ENCODE measurements at regions of chr7 and their contacts with region 1.

Region 1: GRCh38 chr7:100428967-100429636 is 529 bp upstream of the MEPCE start:
- DNase-seq: peak; percentile 100
- ATAC-seq: peak; percentile 58
- H3K4me3 Mint-ChIP-seq: peak overlapping the region; percentile 98
- H3K27ac Mint-ChIP-seq: peak overlapping the region; percentile 100
- H3K4me1 Mint-ChIP-seq: peaks cover 45% of the 10 kb centered on the region
- H3K27me3 Mint-ChIP-seq: no peaks in the 10 kb centered on the region
- CTCF ChIP-seq: no peak

Region 2: DNA sequence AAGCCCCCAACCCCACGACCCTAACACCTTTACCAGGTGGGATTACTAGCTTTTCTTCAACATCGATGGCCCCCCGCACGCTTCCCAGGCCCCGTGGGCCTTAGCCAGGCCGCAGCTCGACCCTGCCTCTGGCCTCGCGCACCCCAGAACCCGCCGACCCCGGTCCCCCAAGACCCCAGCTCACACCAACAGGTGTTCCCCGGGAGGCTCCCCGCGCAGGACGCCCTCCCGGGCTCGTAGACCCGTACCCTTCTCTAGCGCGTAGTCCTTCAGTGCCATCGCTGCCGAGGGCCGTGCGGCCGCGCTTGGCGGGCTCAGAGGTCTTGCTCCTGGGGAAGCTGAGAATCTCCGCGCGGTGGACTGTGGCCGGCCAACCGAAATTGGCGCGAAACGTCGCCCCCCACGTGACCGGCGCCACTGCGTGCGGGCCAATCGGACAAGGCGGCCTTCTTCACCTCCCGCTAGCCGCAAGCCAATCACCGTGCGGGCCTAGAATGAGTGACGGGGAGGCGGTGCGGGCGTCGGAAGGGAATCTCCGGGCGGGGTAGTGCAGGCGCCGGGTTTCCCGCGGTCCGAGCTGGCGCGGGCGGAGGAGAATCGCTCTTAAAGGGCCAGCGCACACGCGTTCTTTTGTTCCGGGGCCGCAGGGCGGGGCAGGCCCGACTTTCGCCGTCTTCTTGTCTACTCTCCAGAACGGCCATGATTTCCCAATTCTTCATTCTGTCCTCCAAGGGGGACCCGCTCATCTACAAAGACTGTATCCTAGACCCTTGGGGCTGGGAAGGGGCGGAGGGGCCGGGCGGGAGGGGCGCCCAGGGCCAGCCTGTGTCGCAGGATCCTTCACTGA is 327.9 kb before region 1 on chr7 and contains the starts of genes AP4M1 and MCM7:
- CTCF ChIA-PET with region 1: no interaction called
- POLR2A ChIA-PET with region 1: interaction called, 46 read pairs
- intact Hi-C with region 1: no loop called
- DNase-seq: peak; percentile 92
- ATAC-seq: peak; percentile 86
- H3K4me3 Mint-ChIP-seq: peak within 1 kb of the TSS; percentile 92
- H3K27ac Mint-ChIP-seq: peak within 1 kb of the TSS; percentile 87
- H3K4me1 Mint-ChIP-seq: peaks cover 32% of the 10 kb centered on the region
- H3K27me3 Mint-ChIP-seq: no peaks in the 10 kb centered on the region
- CTCF ChIP-seq: no peak
- total RNA-seq, gene AP4M1: 11.1 and 12.5 TPM in 2 replicates
- total RNA-seq, gene MCM7: 99.7 and 104 TPM in 2 replicates

Region 3: DNA sequence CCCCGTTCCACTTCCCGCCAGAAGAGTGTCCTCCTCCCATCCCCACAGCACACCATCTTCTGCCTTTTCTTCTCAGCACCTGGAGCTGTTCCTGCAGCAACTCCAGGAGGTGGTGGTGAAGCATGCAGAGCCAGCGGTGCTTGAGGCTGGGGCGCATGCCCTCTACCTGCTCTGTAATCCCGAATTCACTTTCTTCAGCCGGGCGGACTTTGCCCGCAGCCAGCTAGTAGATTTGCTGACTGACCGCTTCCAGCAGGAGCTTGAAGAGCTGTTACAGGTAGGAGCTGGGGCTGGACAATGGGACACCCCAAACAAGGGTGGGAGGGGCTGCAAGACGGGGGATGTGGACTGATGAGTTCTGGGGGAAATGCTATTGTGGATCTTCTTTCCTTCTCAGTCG is 228.4 kb before region 1 on chr7:
- CTCF ChIA-PET with region 1: no interaction called
- POLR2A ChIA-PET with region 1: interaction called, 11 read pairs
- intact Hi-C with region 1: no loop called
- DNase-seq: no peak
- ATAC-seq: no peak
- H3K4me3 Mint-ChIP-seq: peak overlapping the region; percentile 77
- H3K27ac Mint-ChIP-seq: peak overlapping the region; percentile 94
- H3K4me1 Mint-ChIP-seq: peaks cover 63% of the 10 kb centered on the region
- H3K27me3 Mint-ChIP-seq: no peaks in the 10 kb centered on the region
- CTCF ChIP-seq: no peak

Region 4: GRCh38 chr7:100396421-100396982 is 32.6 kb before region 1 on chr7:
- CTCF ChIA-PET with region 1: no interaction called
- POLR2A ChIA-PET with region 1: interaction called, 24 read pairs
- intact Hi-C with region 1: no loop called
- DNase-seq: no peak
- ATAC-seq: peak; percentile 89
- H3K4me3 Mint-ChIP-seq: peak overlapping the region; percentile 73
- H3K27ac Mint-ChIP-seq: peak overlapping the region; percentile 93
- H3K4me1 Mint-ChIP-seq: peaks cover 59% of the 10 kb centered on the region
- H3K27me3 Mint-ChIP-seq: no peaks in the 10 kb centered on the region
- CTCF ChIP-seq: no peak

Region 5: DNA sequence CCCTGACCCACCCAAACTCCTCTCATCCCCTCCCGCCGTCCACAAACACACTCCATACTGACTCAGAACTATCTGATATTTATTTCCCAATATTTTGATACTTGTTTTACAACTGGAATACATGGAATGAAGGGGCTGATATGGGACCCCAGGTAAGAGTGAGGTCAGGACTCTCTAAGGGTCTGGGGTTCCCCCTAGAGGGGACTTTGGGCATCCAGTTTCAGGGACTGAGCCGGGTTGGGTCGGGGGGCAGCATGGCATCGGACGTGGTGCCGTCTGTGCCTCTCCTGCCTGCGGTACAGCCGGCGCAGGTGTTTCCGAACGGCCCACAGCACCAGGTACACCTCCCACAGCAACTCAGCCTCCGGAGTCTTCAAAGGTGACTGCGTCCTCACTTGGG is 27.5 kb after region 1 on chr7:
- CTCF ChIA-PET with region 1: no interaction called
- POLR2A ChIA-PET with region 1: interaction called, 65 read pairs
- intact Hi-C with region 1: no loop called
- DNase-seq: no peak
- ATAC-seq: no peak
- H3K4me3 Mint-ChIP-seq: no peak overlapping the region
- H3K27ac Mint-ChIP-seq: no peak overlapping the region
- H3K4me1 Mint-ChIP-seq: peaks cover 3% of the 10 kb centered on the region
- H3K27me3 Mint-ChIP-seq: no peaks in the 10 kb centered on the region
- CTCF ChIP-seq: no peak

Region 6: DNA sequence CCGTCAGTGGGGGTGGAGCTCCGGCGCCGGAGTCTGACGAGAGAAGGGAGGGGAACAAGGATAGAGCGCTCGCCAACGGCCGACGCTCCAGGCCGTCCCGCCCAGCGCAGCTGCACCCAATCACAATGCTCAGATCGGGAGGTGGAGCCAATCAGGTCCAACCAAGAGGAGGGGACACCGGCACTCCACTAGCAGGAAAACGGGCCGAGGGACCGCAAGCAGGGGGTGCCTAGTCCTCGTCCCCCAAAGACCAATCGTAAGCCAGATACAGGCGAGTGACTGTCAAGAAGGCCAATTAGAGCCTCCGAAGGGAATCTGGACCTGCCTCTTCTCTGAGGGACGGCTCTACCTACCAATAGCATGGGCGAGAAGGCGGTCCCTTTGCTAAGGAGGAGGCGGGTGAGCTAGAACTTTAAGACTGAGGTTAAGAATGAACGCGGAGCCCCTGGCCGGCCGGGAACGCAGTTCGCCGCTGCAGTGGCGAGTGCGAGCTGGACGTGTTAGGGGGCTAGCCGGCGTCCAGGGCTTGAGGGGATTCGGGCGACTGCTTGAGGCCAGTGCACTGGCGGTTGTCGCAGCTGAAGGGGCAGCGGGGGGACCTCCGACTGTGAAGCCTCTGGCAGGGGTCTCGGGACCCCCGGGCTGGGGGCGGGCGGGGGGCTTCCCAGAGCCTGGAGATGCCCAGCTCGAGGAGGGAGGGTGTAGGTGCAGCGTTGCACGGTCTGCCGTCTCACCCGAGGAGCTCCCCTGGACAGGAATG is 157.3 kb after region 1 on chr7 and contains the start of gene FBXO24:
- CTCF ChIA-PET with region 1: no interaction called
- POLR2A ChIA-PET with region 1: interaction called, 44 read pairs
- intact Hi-C with region 1: loop called (anchors 1 kb)
- DNase-seq: peak; percentile 94
- ATAC-seq: peak; percentile 80
- H3K4me3 Mint-ChIP-seq: peak within 1 kb of the TSS; percentile 93
- H3K27ac Mint-ChIP-seq: peak within 1 kb of the TSS; percentile 96
- H3K4me1 Mint-ChIP-seq: peaks cover 38% of the 10 kb centered on the region
- H3K27me3 Mint-ChIP-seq: peaks cover 6% of the 10 kb centered on the region
- CTCF ChIP-seq: no peak
- total RNA-seq, gene FBXO24: 0.29 and 1.9 TPM in 2 replicates

Region 7: DNA sequence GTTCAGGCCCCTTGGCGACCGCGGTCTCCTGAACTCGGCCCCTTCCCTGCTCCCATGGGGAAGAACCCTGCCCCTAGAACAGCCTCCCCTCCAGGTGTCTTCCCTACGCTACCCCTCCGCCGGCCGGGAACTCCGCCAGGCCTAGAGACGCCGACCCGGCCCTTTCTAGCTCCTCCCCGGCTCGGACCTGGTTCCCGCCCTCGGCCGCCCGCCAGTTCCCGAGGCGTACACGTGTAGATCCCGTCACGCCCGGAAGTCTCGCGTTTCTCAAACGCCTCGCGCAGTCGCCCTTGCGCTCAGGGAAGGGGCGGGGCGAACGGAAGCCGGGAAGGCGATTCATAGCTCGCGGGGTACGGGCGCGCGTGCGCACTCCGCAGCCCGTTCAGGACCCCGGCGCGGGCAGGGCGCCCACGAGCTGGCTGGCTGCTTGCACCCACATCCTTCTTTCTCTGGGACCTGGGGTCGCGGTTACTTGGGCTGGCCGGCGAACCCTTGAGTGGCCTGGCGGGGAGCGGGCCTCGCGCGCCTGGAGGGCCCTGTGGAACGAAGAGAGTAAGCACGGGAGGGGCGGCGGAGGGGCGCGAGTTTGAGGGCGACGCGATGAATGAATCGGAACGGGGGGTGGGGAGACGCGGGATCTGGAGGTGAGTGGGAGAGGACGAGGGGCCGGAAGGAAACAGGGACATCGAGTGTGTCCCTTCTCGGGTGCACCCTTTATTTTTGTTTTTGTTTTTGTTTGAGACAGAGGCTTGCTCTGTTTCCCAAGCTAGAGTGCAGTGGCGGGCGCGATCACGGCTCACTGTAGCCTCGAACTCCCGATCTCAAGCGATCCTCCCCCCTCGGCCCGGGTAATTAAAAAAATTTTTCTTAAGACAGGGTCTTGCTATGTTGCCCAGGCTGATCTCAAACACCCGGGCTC is 276.9 kb after region 1 on chr7 and contains the start of gene POP7:
- CTCF ChIA-PET with region 1: no interaction called
- POLR2A ChIA-PET with region 1: interaction called, 19 read pairs
- intact Hi-C with region 1: loop called (anchors 1 kb)
- DNase-seq: peak; percentile 98
- ATAC-seq: peak; percentile 94
- H3K4me3 Mint-ChIP-seq: peak within 1 kb of the TSS; percentile 93
- H3K27ac Mint-ChIP-seq: peak within 1 kb of the TSS; percentile 88
- H3K4me1 Mint-ChIP-seq: peaks cover 16% of the 10 kb centered on the region
- H3K27me3 Mint-ChIP-seq: no peaks in the 10 kb centered on the region
- CTCF ChIP-seq: no peak
- total RNA-seq, gene POP7: 21.5 and 21.7 TPM in 2 replicates

Measured in activated B cell treated with CpG ODN at 0.5 μM for 24 hours (primary cell).